Activated T-helper 1 cell treated with anti-CD3 and anti-CD28 coated beads, Interleukin-12 subunit alpha, Interleukin-12 subunit beta, Interleukin-2, Interleukin-4 antibody, amounts not matched to agents 30 ng/mL and 10 ng/mL and 1 ng/mL, durations not matched to agents 14 hours and 24 hours and 36 hours (primary cell): ENCODE measurements at regions of chr15 and their contacts with region 1.

Region 1: DNA sequence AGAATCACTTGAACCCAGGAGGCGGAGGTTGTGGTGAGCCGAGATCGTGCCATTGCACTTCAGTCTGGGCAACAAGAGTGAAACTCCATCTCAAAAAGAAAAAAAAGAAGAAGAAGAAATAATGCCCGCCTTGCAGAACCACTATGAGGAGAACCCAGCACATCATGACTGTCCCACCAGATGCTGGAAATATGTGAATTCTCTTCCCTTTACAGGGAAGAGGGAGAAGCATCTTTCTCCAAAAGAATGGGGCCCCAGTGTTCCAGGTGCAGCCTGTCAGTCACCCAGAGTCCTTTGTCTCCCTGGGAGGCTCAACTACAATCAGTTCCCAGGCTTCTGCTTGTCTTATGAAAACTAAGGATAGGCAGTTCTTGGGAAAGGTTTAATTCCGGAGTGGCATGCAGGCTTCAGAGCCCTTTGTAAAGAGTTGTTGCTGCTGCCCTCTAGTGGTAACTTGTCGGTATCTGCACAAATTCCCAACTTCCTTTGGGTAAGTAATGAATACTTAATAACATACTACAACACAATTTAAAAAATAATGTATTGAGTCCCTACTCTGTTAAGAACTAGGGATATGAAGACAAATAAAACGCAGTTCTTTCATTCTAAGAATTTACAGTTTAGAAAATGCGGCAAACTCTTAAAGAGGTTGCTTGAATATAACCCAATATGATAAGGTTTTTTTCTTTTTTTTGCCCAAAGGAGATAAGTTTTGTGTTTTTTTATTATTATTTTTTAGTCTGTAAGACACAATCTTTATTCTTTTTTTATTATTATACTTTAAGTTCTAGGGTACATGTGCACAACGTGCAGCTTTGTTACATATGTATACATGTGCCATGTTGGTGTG is 18.6 kb upstream of the TICRR start:
- DNase-seq: peak; percentile 21
- H3K4me3 Mint-ChIP-seq: no peak overlapping the region
- H3K27ac Mint-ChIP-seq: no peak overlapping the region
- H3K4me1 Mint-ChIP-seq: no peaks in the 10 kb centered on the region
- H3K27me3 Mint-ChIP-seq: peaks cover 21% of the 10 kb centered on the region

Region 2: DNA sequence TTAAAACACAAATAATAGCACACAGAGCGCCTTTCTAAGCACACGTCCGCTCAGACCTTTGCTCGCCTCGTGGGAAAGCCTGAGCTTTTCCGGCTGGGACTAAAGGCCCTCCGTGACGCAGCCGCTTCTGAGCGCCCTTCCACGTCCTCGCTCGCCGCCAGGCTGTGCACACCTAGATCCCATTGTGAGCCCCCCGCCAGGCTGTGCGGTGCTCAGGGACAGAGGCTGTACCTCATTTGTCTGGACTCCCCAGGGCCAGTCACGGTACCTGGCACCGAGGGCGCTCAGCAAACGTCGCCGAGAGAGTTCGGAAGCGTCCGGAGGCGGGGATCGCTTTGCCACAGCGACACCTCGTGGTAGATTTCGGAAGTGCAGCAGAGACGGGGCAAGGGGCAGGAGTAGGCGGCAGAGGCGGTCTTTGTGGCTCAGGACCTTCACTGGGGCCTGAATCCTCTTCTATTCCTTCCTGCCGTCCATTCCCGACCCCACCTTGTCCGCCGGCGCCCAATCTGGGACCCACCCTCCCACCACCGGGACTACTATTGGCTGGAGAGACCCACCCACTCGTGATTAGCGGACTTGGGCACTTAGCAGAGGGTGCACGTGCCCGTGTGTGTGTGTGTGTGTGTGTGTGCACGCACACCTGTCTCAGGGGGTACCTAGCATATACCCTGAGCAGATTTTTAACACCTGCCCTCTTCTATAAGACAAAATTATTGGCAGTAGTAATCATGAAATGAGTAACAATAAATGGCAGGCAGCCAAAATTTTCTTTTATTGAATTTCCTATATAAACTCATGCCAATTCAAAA is 125.9 kb before region 1 on chr15:
- intact Hi-C with region 1: loop called (anchors 2 kb)
- DNase-seq: peak; percentile 78
- H3K4me3 Mint-ChIP-seq: peak overlapping the region; percentile 82
- H3K27ac Mint-ChIP-seq: peak overlapping the region; percentile 2
- H3K4me1 Mint-ChIP-seq: peaks cover 7% of the 10 kb centered on the region
- H3K27me3 Mint-ChIP-seq: peaks cover 18% of the 10 kb centered on the region

Region 3: GRCh38 chr15:89494935-89495637 is 61.6 kb before region 1 on chr15:
- intact Hi-C with region 1: loop called (anchors 1 kb)
- DNase-seq: no peak
- H3K4me3 Mint-ChIP-seq: no peak overlapping the region
- H3K27ac Mint-ChIP-seq: no peak overlapping the region
- H3K4me1 Mint-ChIP-seq: no peaks in the 10 kb centered on the region
- H3K27me3 Mint-ChIP-seq: peaks cover 38% of the 10 kb centered on the region